Colonic mucosa (tissue), 4 donors: ENCODE measurements at regions of chr19 and their contacts with region 1.

Region 1: GRCh38 chr19:35140962-35141637 is 2.0 kb upstream of the FXYD7 start:
- DNase-seq: peak; percentile 98
- H3K4me3 ChIP-seq: peak overlapping the region; percentile 15
- H3K27ac ChIP-seq: peak overlapping the region; percentile 23
- H3K4me1 ChIP-seq: peaks cover 5% of the 10 kb centered on the region
- H3K27me3 ChIP-seq: peaks cover 7% of the 10 kb centered on the region
- CTCF ChIP-seq: no peak

Region 2: DNA sequence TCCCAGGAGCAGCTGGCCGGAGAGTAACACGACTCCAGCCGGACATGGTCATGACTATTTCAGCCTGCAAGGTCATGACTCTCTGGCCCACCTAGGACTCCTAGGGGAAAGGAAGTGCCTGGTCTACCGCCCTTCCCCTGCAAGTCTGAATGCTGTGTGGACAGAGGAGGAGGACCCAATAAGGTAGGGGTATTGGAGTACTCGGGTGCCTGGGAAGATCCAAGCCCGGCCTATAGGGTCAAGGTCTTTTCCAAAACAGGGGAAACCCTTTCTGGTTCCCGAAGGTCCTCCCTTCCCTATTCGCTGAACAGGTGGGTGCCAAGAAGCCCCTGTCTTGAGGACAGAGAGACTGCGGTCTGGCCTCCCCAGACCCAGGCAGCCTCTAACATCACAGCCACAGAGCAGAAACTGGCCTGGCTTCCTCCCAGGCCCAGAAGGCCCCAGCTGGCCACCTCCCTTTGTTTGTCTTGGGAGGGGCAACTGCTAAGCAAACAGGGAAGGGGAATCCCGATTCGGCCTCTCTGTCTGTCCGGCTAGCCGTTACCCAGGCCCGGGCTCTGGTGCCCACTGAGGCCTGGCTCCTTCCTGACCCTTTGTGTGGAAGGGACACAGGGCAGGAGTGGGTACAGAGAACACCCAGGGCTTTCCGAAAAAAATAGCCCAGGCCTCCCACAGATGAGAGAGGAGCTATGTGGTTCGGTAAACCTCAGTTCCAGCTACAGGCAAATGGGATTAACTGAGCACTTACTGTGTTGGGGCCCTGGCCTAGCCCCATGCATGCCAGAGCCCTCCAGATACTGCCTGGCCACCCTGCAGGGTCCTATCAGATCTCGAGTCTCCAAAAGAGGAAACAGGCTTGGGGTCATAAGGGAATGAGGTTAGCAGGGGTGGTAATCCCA is 146.2 kb before region 1 on chr19:
- intact Hi-C with region 1: no loop called
- DNase-seq: peak; percentile 86
- H3K4me3 ChIP-seq: no peak overlapping the region
- H3K27ac ChIP-seq: peak overlapping the region; percentile 55
- H3K4me1 ChIP-seq: peaks cover 23% of the 10 kb centered on the region
- H3K27me3 ChIP-seq: no peaks in the 10 kb centered on the region
- CTCF ChIP-seq: no peak

Region 3: DNA sequence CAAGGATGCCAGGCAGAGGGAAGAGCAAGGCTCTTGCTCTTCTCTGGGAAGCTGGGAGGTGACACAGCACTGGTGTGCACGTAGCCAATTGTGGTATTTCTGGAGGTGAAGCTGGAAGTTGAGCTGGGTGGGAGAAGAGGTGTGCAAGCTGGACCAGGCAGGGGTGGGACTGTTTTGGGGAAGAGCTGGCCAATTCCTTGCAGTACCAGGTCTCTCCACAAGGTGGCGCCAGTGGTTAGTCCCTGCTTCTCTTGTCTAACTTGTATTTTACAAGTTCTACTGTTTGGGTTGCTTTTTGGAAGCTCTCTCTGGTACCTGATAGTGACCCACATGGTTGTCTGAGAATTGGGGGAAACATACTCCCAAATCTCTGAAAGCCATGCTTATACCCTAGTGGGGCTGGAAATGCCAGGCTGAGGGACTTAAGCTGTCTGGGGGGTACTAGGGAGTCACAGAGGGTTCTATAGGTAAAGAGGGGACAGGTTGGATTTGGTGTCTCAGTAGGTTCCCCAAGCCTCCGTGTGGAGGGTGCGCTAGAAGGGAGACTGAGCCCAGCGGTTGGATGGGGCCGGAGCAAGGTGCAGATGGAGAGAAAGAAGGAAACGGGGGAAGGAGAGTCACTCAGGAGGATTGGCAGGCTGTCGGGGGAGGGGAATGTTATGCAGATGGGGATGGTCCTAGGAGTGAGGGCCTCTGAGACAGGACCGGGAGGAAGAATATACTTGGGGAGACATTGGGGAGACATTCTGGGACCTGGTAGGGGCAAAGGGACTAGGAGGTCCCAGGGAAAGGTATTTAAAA is 96.6 kb before region 1 on chr19:
- intact Hi-C with region 1: no loop called
- DNase-seq: peak; percentile 68
- H3K4me3 ChIP-seq: no peak overlapping the region
- H3K27ac ChIP-seq: no peak overlapping the region
- H3K4me1 ChIP-seq: no peaks in the 10 kb centered on the region
- H3K27me3 ChIP-seq: peaks cover 4% of the 10 kb centered on the region
- CTCF ChIP-seq: peak; percentile 95

Region 4: DNA sequence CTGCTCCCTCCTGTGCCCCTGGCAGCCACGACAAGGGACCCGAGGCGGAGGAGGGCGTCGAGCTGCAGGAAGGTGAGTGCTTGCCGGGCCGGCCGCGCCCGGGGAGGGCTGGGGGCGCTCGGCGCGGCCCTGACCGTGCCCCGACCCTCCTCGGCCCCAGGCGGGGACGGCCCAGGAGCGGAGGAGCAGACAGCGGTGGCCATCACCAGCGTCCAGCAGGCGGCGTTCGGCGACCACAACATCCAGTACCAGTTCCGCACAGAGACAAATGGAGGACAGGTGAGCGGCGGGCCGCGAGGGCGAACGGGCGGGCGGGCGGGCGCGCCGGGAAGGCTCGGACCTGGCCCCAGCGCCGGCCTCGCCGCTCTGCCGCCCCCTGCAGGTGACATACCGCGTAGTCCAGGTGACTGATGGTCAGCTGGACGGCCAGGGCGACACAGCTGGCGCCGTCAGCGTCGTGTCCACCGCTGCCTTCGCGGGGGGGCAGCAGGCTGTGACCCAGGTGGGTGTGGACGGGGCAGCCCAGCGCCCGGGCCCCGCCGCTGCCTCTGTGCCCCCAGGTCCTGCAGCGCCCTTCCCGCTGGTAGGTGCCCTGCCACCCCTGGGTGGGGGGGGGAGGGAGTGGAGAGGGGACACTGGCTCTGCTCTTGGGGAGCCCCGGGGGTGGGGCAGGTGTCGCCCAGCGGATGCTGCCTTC is 128.5 kb after region 1 on chr19:
- intact Hi-C with region 1: loop called (anchors 10 kb)
- DNase-seq: peak; percentile 92
- H3K4me3 ChIP-seq: peak overlapping the region; percentile 57
- H3K27ac ChIP-seq: peak overlapping the region; percentile 84
- H3K4me1 ChIP-seq: peaks cover 5% of the 10 kb centered on the region
- H3K27me3 ChIP-seq: no peaks in the 10 kb centered on the region
- CTCF ChIP-seq: peak; percentile 92